Naive thymus-derived CD4-positive, alpha-beta T cell (primary cell): ENCODE measurements at regions of chr13 and their contacts with region 1.

Region 1: GRCh38 chr13:49300739-49301589 is 53.2 kb downstream of the CDADC1 start:
- DNase-seq: peak in 8 of 9 donors; percentile 67 to 82 (median 75)
- ATAC-seq: peak; percentile 96
- H3K4me3 ChIP-seq: peak overlapping the region; percentile 67
- H3K4me3 Mint-ChIP-seq: peak overlapping the region; percentile 63 to 90 (median 80)
- H3K27ac ChIP-seq: no peak overlapping the region
- H3K27ac Mint-ChIP-seq: peak overlapping the region; percentile 16 to 82 (median 71)
- H3K4me1 ChIP-seq: no peaks in the 10 kb centered on the region
- H3K4me1 Mint-ChIP-seq: peaks cover 8 to 28% (median 14%) of the 10 kb centered on the region in 7 donors
- H3K27me3 ChIP-seq: no peaks in the 10 kb centered on the region
- H3K27me3 Mint-ChIP-seq: no peaks in the 10 kb centered on the region

Region 2: GRCh38 chr13:49132479-49133002 is 168.4 kb before region 1 on chr13:
- CTCF ChIA-PET with region 1: no interaction called
- POLR2A ChIA-PET with region 1: no interaction called
- intact Hi-C with region 1: no loop called
- DNase-seq: no peak
- ATAC-seq: no peak
- H3K4me3 ChIP-seq: no peak overlapping the region
- H3K4me3 Mint-ChIP-seq: no peak overlapping the region
- H3K27ac ChIP-seq: no peak overlapping the region
- H3K27ac Mint-ChIP-seq: peak overlapping the region in 6 of 9 donors; percentile 3 to 49 (median 18)
- H3K4me1 ChIP-seq: peaks cover 0 to 9% of the 10 kb centered on the region in 2 donors
- H3K4me1 Mint-ChIP-seq: peaks cover 7 to 30% (median 22%) of the 10 kb centered on the region in 7 donors
- H3K27me3 ChIP-seq: no peaks in the 10 kb centered on the region
- H3K27me3 Mint-ChIP-seq: no peaks in the 10 kb centered on the region

Region 3: DNA sequence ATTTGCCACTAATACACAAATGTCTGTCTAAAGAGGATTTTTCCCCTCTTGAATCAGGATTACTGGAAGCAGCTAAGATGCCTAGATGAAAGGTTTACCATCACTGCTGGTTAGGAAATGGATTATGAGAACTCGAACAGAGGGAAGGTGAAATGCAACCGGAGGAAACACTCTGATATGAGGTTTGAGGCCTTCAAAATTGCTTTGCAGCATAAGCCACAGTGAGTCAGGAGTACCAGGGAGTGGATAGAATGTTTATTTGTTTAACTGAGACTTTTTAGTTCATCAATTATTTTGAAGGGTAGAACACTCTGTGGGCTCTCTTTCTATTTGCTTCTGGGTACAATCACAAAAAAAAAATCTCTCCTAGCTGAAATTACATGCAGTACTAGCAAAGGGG is 35.1 kb before region 1 on chr13:
- CTCF ChIA-PET with region 1: no interaction called
- POLR2A ChIA-PET with region 1: interaction called, 3 read pairs
- intact Hi-C with region 1: loop called in 1 of 2 experiments (anchors 1 kb)
- DNase-seq: no peak
- ATAC-seq: no peak
- H3K4me3 ChIP-seq: no peak overlapping the region
- H3K4me3 Mint-ChIP-seq: no peak overlapping the region
- H3K27ac ChIP-seq: no peak overlapping the region
- H3K27ac Mint-ChIP-seq: peak overlapping the region in 1 of 9 donors; percentile 11
- H3K4me1 ChIP-seq: no peaks in the 10 kb centered on the region
- H3K4me1 Mint-ChIP-seq: peaks cover 0 to 7% (median 0%) of the 10 kb centered on the region in 7 donors
- H3K27me3 ChIP-seq: no peaks in the 10 kb centered on the region
- H3K27me3 Mint-ChIP-seq: no peaks in the 10 kb centered on the region

Region 4: DNA sequence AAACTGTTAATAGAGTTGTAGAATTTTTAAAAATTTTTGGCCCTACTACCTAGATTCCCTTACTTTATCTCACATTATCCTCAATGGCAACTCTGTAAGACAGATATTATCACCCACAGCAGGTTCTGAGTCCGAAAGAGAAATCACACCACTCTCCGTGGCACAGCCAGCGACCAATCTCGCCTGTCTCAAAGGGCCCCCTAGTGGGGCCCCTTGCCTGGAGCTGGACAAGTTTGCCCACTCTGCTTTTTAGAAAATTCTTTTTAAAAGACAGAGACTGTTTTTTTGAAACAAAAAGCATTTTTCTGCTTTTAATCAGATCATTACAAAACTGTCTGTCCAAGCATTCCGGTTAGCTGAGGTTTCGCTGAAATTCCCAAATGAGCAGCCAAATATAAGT is 216.5 kb after region 1 on chr13:
- CTCF ChIA-PET with region 1: no interaction called
- POLR2A ChIA-PET with region 1: no interaction called
- intact Hi-C with region 1: loop called in 1 of 2 experiments (anchors 1 kb)
- DNase-seq: no peak
- ATAC-seq: no peak
- H3K4me3 ChIP-seq: no peak overlapping the region
- H3K4me3 Mint-ChIP-seq: no peak overlapping the region
- H3K27ac ChIP-seq: no peak overlapping the region
- H3K27ac Mint-ChIP-seq: peak overlapping the region in 3 of 9 donors; percentile 10 to 65 (median 52)
- H3K4me1 ChIP-seq: no peaks in the 10 kb centered on the region
- H3K4me1 Mint-ChIP-seq: peaks cover 6 to 18% (median 13%) of the 10 kb centered on the region in 7 donors
- H3K27me3 ChIP-seq: no peaks in the 10 kb centered on the region
- H3K27me3 Mint-ChIP-seq: no peaks in the 10 kb centered on the region

Region 5: DNA sequence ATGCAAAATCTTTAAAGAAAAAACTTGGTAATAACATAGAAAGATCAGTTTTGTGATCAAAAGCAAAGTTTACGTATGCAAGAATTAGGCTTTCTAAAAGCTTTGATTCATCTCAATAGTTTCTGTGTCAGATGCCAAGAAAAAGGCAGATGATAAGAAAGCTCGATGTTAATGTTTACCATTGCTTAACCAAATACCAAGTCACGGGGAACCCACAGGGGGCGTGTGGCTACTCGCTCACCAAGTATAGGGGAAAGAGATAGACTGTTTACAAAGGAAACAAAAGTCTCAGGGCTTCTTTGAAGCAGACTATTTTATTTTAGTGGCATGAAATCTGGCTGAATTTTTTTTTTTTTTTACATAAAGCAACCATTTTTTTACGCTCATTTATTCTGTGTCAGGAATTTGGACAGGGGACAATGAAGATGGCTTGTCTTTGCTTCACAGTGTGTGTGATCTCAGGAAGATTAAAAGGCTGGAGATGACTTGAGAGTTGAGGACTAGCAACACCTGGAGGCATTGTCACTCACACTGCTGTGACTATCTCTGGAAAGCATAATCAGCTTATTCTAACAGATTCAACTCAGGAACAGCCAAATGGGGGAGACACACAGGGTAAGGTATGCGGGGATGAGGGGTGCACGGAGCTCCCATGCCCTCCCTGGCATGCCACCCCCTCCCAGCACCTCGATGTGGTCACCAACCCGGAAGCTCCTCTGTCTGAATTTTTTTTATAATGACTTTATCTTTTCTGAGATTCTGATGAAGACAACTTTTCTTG is 259.5 kb after region 1 on chr13:
- CTCF ChIA-PET with region 1: no interaction called
- POLR2A ChIA-PET with region 1: no interaction called
- intact Hi-C with region 1: no loop called
- DNase-seq: peak in 3 of 9 donors; percentile 4 to 20 (median 13)
- ATAC-seq: no peak
- H3K4me3 ChIP-seq: no peak overlapping the region
- H3K4me3 Mint-ChIP-seq: no peak overlapping the region
- H3K27ac ChIP-seq: no peak overlapping the region
- H3K27ac Mint-ChIP-seq: peak overlapping the region in 4 of 9 donors; percentile 29 to 63 (median 42)
- H3K4me1 ChIP-seq: no peaks in the 10 kb centered on the region
- H3K4me1 Mint-ChIP-seq: peaks cover 4 to 15% (median 9%) of the 10 kb centered on the region in 7 donors
- H3K27me3 ChIP-seq: no peaks in the 10 kb centered on the region
- H3K27me3 Mint-ChIP-seq: no peaks in the 10 kb centered on the region

Region 6: GRCh38 chr13:49585220-49586157 is 284.5 kb after region 1 on chr13 and contains the start of gene RCBTB1:
- CTCF ChIA-PET with region 1: interaction called, 3 read pairs
- POLR2A ChIA-PET with region 1: no interaction called
- intact Hi-C with region 1: loop called in 1 of 2 experiments (anchors 1 kb)
- DNase-seq: peak; percentile 47 to 74 (median 66)
- ATAC-seq: peak; percentile 97
- H3K4me3 ChIP-seq: peak within 1 kb of the TSS; percentile 56
- H3K4me3 Mint-ChIP-seq: peak within 1 kb of the TSS; percentile 83 to 100 (median 92)
- H3K27ac ChIP-seq: peak within 1 kb of the TSS; percentile 82
- H3K27ac Mint-ChIP-seq: peak within 1 kb of the TSS; percentile 86 to 96 (median 94)
- H3K4me1 ChIP-seq: peaks cover 10 to 16% of the 10 kb centered on the region in 2 donors
- H3K4me1 Mint-ChIP-seq: peaks cover 32 to 53% (median 50%) of the 10 kb centered on the region in 7 donors
- H3K27me3 ChIP-seq: no peaks in the 10 kb centered on the region
- H3K27me3 Mint-ChIP-seq: peaks cover 0 to 3% (median 0%) of the 10 kb centered on the region in 5 donors
- total RNA-seq, gene RCBTB1: 16.3 to 22.2 (median 20.4) TPM

Region 7: GRCh38 chr13:49936085-49936940 is 635.3 kb after region 1 on chr13 and contains the start of gene SPRYD7:
- CTCF ChIA-PET with region 1: no interaction called
- POLR2A ChIA-PET with region 1: no interaction called
- intact Hi-C with region 1: loop called in 1 of 2 experiments (anchors 1 kb)
- DNase-seq: peak; percentile 82 to 99 (median 90)
- ATAC-seq: peak; percentile 98
- H3K4me3 ChIP-seq: peak within 1 kb of the TSS; percentile 99
- H3K4me3 Mint-ChIP-seq: peak within 1 kb of the TSS; percentile 86 to 99 (median 96)
- H3K27ac ChIP-seq: peak within 1 kb of the TSS; percentile 69
- H3K27ac Mint-ChIP-seq: peak within 1 kb of the TSS; percentile 74 to 95 (median 86)
- H3K4me1 ChIP-seq: peaks cover 10 to 14% of the 10 kb centered on the region in 2 donors
- H3K4me1 Mint-ChIP-seq: peaks cover 12 to 28% (median 15%) of the 10 kb centered on the region in 7 donors
- H3K27me3 ChIP-seq: no peaks in the 10 kb centered on the region
- H3K27me3 Mint-ChIP-seq: peaks cover 0 to 33% (median 0%) of the 10 kb centered on the region in 5 donors
- total RNA-seq, gene SPRYD7: 1.7 to 3.1 (median 2.3) TPM

Region 8: GRCh38 chr13:50457415-50458393 is 1156.7 kb after region 1 on chr13:
- CTCF ChIA-PET with region 1: no interaction called
- POLR2A ChIA-PET with region 1: no interaction called
- intact Hi-C with region 1: no loop called
- DNase-seq: no peak
- ATAC-seq: no peak
- H3K4me3 ChIP-seq: no peak overlapping the region
- H3K4me3 Mint-ChIP-seq: no peak overlapping the region
- H3K27ac ChIP-seq: no peak overlapping the region
- H3K27ac Mint-ChIP-seq: no peak overlapping the region
- H3K4me1 ChIP-seq: peaks cover 0 to 3% of the 10 kb centered on the region in 2 donors
- H3K4me1 Mint-ChIP-seq: peaks cover 0 to 2% (median 0%) of the 10 kb centered on the region in 7 donors
- H3K27me3 ChIP-seq: no peaks in the 10 kb centered on the region
- H3K27me3 Mint-ChIP-seq: peaks cover 0 to 11% (median 0%) of the 10 kb centered on the region in 5 donors